H1 (cell line): ENCODE measurements at regions of chr17 and their contacts with region 1.

Region 1: GRCh38 chr17:15436473-15437302 is 30.7 kb downstream of the CDRT4 start:
- DNase-seq: peak in 1 of 2 experiments; percentile 56
- H3K4me3 ChIP-seq: no peak overlapping the region
- H3K27ac ChIP-seq: no peak overlapping the region
- H3K4me1 ChIP-seq: no peaks in the 10 kb centered on the region
- H3K27me3 ChIP-seq: no peaks in the 10 kb centered on the region
- CTCF ChIP-seq: peak; percentile 40 to 66 (median 47)
- EP300 ChIP-seq: no peak
- POLR2A ChIP-seq: no peak
- RAD21 ChIP-seq: peak; percentile 27 to 45; a peak in 2 of 4 replicates

Region 2: GRCh38 chr17:15262291-15263205 is 174.1 kb before region 1 on chr17:
- CTCF ChIA-PET with region 1: interaction called, 27 read pairs
- POLR2A ChIA-PET with region 1: no interaction called
- DNase-seq: peak in 1 of 2 experiments; percentile 75
- H3K4me3 ChIP-seq: peak overlapping the region; percentile 28 to 71 (median 64); a peak in 7 of 8 replicates
- H3K27ac ChIP-seq: no peak overlapping the region
- H3K4me1 ChIP-seq: peaks cover 0 to 16% (median 4%) of the 10 kb centered on the region in 4 experiments; a peak in 5 of 7 replicates
- H3K27me3 ChIP-seq: peaks cover 42 to 71% (median 63%) of the 10 kb centered on the region in 4 experiments
- CTCF ChIP-seq: no peak
- EP300 ChIP-seq: no peak
- POLR2A ChIP-seq: no peak
- RAD21 ChIP-seq: no peak

Region 3: GRCh38 chr17:15424521-15424920 is 12.2 kb before region 1 on chr17:
- CTCF ChIA-PET with region 1: interaction called, 13 read pairs
- POLR2A ChIA-PET with region 1: no interaction called
- DNase-seq: no peak
- H3K4me3 ChIP-seq: no peak overlapping the region
- H3K27ac ChIP-seq: no peak overlapping the region
- H3K4me1 ChIP-seq: no peaks in the 10 kb centered on the region
- H3K27me3 ChIP-seq: no peaks in the 10 kb centered on the region
- CTCF ChIP-seq: no peak
- EP300 ChIP-seq: no peak
- POLR2A ChIP-seq: no peak
- RAD21 ChIP-seq: no peak